Activated naive CD8-positive, alpha-beta T cell treated with anti-CD3 and anti-CD28 coated beads, Interleukin-2, amount 10 ng/mL, durations not matched to agents 7 days and 5 days (primary cell): ENCODE measurements at regions of chr15 and their contacts with region 1.

Region 1: GRCh38 chr15:42608110-42608531 is 32.7 kb downstream of the STARD9 start:
- DNase-seq: peak; percentile 69
- ATAC-seq: peak; percentile 68
- H3K4me3 Mint-ChIP-seq: peak overlapping the region; percentile 74
- H3K27ac Mint-ChIP-seq: peak overlapping the region; percentile 87
- H3K4me1 Mint-ChIP-seq: peaks cover 48% of the 10 kb centered on the region
- H3K27me3 Mint-ChIP-seq: no peaks in the 10 kb centered on the region

Region 2: DNA sequence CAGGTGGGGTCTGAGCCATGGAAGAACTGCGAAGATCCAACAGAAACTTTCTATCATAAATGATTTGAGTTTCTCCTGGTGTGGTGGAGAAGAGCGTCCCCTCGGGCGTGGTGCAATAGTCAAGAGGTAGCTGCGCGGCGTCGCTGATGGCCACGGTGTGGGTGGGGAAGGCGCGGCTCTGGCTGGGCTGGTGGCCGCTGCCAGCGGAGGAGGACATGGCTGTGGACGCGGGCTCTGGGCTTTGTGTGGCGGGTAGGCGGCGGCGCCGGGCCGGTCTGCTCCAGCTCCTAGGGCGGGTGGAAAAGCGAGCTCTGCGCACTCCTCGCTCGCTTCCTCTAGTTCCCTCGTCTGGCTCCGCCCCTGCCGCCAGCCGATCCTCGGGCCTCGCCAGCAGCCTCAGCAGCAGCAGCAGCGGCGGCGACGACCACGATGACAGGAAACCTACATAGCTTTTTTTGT is 26.8 kb before region 1 on chr15:
- POLR2A ChIA-PET with region 1: interaction called, 23 read pairs
- DNase-seq: peak; percentile 86
- ATAC-seq: peak; percentile 100
- H3K4me3 Mint-ChIP-seq: peak overlapping the region; percentile 87
- H3K27ac Mint-ChIP-seq: peak overlapping the region; percentile 87
- H3K4me1 Mint-ChIP-seq: peaks cover 37% of the 10 kb centered on the region
- H3K27me3 Mint-ChIP-seq: peaks cover 7% of the 10 kb centered on the region

Region 3: DNA sequence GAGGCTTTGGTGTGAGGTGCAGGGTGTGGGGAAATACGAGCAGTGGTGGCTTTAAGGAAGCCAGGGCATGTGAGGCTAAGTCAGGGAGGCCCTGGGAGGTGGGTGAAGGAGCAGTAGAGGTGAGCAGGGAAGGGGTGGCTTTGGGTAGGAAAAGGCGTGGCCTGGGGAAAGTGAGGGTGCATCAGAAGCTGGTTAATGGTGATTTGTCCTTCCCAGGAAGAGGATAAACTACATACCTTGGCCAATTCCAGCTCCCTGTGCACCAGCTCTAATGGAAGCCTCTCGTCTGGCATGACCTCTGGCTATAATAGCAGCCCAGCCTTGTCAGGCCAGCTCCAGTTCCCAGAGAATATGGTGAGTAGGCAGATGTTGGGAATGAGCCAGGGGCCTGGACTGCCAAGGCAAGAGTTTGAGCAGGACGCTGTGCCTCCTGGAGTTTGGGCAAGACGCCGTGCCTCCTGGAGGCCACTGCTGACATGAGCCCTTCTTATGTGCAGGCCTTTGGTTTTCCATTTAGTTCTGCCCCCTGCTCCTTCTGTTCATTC is 87.5 kb after region 1 on chr15:
- POLR2A ChIA-PET with region 1: no interaction called
- DNase-seq: no peak
- ATAC-seq: no peak
- H3K4me3 Mint-ChIP-seq: no peak overlapping the region
- H3K27ac Mint-ChIP-seq: no peak overlapping the region
- H3K4me1 Mint-ChIP-seq: peaks cover 15% of the 10 kb centered on the region
- H3K27me3 Mint-ChIP-seq: no peaks in the 10 kb centered on the region